ENCODE measurements at regions of chrX and their contacts with region 1.

Region 1: DNA sequence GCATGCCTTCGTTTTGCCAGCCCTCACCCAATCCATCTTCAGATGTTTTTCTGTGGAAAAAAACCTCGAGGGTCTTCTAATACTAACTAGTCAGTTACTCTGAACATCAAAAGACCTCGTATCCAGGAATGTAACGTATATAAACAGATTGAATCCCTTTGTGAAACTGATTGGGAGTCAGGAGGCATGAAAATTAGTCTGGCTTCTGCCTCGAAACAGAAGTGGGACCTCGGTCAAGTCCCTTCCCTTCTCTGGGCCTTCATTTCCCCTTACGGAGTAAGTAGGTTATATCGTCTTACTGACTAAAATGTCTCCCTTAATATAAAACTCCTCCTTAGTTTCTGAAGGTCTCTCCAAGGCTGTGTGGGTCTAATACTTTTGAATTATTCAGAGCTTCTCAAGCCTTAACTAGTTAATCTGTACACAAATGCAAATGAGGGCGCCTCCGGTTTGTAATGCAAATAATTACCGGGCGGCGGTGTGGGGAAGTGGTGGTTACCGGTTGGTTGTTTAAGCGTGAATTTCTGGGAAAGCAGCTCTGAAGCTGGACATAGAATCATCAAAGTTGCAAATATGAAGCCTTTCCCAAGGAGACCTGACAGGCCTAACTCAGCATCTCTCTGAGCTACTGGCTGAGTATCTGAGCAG is 11.4 kb upstream of the NKRF start:
- DNase-seq: no peak
- ATAC-seq: peak; percentile 76
- H3K4me3 ChIP-seq: peak overlapping the region; percentile 29; the same call in 1 of the 2 replicates
- H3K27ac ChIP-seq: peak overlapping the region; percentile 54
- H3K4me1 ChIP-seq: peaks cover 30% of the 10 kb centered on the region
- H3K27me3 ChIP-seq: no peaks in the 10 kb centered on the region
- CTCF ChIP-seq: no peak
- EP300 ChIP-seq: no peak
- POLR2A ChIP-seq: 0 out of 2 replicates have a peak, but pooled peaks have one; percentile 4
- RAD21 ChIP-seq: no peak

Region 2: GRCh38 chrX:119606280-119607015 is 11.2 kb before region 1 on chrX and contains the start of gene NKRF:
- CTCF ChIA-PET with region 1: interaction called, 23 read pairs
- POLR2A ChIA-PET with region 1: interaction called, 13 read pairs
- RAD21 ChIA-PET with region 1: interaction called, 20 read pairs
- SMC1A ChIA-PET with region 1: interaction called, 9 read pairs
- in situ Hi-C with region 1: no loop called
- intact Hi-C with region 1: no loop called
- DNase-seq: peak; percentile 78
- ATAC-seq: peak; percentile 78
- H3K4me3 ChIP-seq: peak within 1 kb of the TSS; percentile 57
- H3K27ac ChIP-seq: peak within 1 kb of the TSS; percentile 85
- H3K4me1 ChIP-seq: no peaks in the 10 kb centered on the region; the same call in 1 of the 2 replicates
- H3K27me3 ChIP-seq: no peaks in the 10 kb centered on the region
- CTCF ChIP-seq: no peak
- EP300 ChIP-seq: no peak
- POLR2A ChIP-seq: peak; percentile 93
- RAD21 ChIP-seq: no peak
- polyA plus RNA-seq, gene NKRF: 6.2 to 9.5 TPM

Region 3: DNA sequence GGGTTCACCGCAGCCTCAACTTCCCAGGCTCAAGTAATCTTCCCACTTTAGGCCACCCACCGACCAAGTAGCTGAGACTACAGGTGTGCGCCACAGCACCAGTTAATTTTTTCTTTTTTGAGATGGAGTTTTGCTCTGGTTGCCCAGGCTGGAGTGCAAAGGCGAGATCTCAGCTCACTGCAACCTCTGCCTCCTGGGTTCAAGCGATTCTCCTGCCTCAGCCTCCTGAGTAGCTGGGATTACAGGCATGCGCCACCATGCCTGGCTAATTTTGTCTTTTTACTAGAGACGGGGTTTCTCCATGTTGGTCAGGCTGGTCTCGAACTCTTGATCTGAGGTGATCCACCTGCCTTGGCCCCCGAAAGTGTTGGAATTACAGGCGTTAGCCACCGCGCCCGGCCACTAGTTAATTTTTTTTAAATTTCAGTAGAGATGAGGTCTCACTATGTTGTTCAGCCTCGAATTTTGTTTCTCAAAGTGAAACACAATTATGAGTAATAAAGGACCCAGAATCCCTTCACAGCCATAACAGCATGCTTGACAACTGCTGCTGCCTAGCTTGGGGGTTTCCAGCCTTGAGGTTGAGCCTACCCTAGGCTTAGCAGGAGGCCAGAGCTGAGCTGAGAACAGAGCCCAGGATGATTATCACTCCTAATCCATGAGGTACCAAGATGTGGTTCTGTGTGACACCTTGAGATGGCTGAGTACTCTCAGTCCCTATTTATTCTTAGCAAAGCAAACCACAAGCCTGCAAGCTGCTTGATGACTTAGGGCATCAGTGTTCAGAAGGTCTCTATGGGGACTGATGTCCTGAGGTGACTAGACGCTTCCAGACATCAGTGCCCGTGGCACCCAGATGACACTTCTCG is 30.1 kb after region 1 on chrX:
- CTCF ChIA-PET with region 1: interaction called, 9 read pairs
- POLR2A ChIA-PET with region 1: interaction called, 4 read pairs
- RAD21 ChIA-PET with region 1: interaction called, 32 read pairs
- SMC1A ChIA-PET with region 1: interaction called, 48 read pairs
- in situ Hi-C with region 1: no loop called
- intact Hi-C with region 1: loop called (anchors 1 kb)
- DNase-seq: peak; percentile 98
- ATAC-seq: peak; percentile 95
- H3K4me3 ChIP-seq: 0 out of 2 replicates have a peak overlapping the region, but pooled peaks have one; percentile 11
- H3K27ac ChIP-seq: peak overlapping the region; percentile 89
- H3K4me1 ChIP-seq: peaks cover 47% of the 10 kb centered on the region
- H3K27me3 ChIP-seq: no peaks in the 10 kb centered on the region
- CTCF ChIP-seq: no peak
- EP300 ChIP-seq: peak; percentile 94 to 97
- POLR2A ChIP-seq: peak; percentile 53
- RAD21 ChIP-seq: no peak

Region 4: DNA sequence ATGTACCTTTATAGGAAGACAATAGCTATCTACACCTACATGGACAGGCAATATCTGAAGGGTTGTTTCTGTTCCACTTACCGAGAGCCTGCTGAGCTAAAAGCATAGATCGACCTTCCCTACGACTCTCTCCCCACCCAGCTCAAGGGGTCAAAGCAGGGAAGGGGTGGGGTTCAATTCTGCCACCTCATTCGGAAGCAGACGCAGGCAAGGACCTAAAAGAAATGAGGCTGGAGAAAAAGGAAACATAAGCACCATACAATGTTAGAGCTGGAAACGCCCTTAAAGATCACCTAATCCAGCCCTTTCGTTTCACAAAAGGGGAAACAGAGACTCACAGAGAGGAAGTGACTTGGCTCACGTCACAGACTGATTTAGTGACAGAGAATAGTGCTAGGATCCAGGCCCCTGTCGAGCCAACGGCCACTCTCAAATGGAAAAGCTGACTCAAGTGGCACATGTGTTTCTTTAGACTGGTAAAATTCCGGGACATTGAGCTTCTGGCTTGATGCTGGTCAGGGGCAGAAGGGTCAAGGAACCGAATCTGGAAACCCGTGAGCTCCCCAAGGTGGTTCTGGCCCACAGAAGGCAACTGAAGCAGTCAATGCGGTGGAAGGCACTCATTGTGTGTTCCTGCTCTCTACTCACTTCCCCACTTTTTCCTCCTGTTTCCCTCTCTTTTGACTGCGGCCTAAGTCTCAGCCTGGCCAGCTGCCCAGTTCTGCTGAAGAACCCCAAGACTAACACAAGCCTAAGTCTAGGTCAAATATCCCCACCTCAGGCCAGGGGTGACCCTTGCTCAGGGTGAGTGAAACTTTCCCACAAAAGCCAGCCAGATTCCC is 67.8 kb after region 1 on chrX:
- CTCF ChIA-PET with region 1: interaction called, 10 read pairs
- POLR2A ChIA-PET with region 1: interaction called, 12 read pairs
- RAD21 ChIA-PET with region 1: interaction called, 24 read pairs
- SMC1A ChIA-PET with region 1: interaction called, 30 read pairs
- in situ Hi-C with region 1: no loop called
- intact Hi-C with region 1: loop called (anchors 5 kb)
- DNase-seq: no peak
- ATAC-seq: peak; percentile 56
- H3K4me3 ChIP-seq: peak overlapping the region; percentile 60; the same call in 1 of the 2 replicates
- H3K27ac ChIP-seq: peak overlapping the region; percentile 84
- H3K4me1 ChIP-seq: peaks cover 57% of the 10 kb centered on the region
- H3K27me3 ChIP-seq: no peaks in the 10 kb centered on the region
- CTCF ChIP-seq: no peak
- EP300 ChIP-seq: no peak
- POLR2A ChIP-seq: no peak
- RAD21 ChIP-seq: no peak

Region 5: GRCh38 chrX:119775517-119776238 is 158.0 kb after region 1 on chrX:
- CTCF ChIA-PET with region 1: interaction called, 13 read pairs
- POLR2A ChIA-PET with region 1: interaction called, 3 read pairs
- RAD21 ChIA-PET with region 1: interaction called, 14 read pairs
- SMC1A ChIA-PET with region 1: interaction called, 5 read pairs
- in situ Hi-C with region 1: no loop called
- intact Hi-C with region 1: loop called (anchors 1 kb)
- DNase-seq: no peak
- ATAC-seq: peak; percentile 69
- H3K4me3 ChIP-seq: no peak overlapping the region
- H3K27ac ChIP-seq: peak overlapping the region; percentile 83
- H3K4me1 ChIP-seq: peaks cover 5% of the 10 kb centered on the region
- H3K27me3 ChIP-seq: no peaks in the 10 kb centered on the region
- CTCF ChIP-seq: no peak
- EP300 ChIP-seq: no peak
- POLR2A ChIP-seq: 0 out of 2 replicates have a peak, but pooled peaks have one; percentile 38
- RAD21 ChIP-seq: no peak

Region 6: GRCh38 chrX:119871599-119872395 is 254.2 kb after region 1 on chrX and contains the starts of genes NDUFA1 and RNF113A:
- CTCF ChIA-PET with region 1: no interaction called
- POLR2A ChIA-PET with region 1: no interaction called
- RAD21 ChIA-PET with region 1: no interaction called
- SMC1A ChIA-PET with region 1: no interaction called
- in situ Hi-C with region 1: no loop called
- intact Hi-C with region 1: no loop called
- DNase-seq: peak; percentile 59
- ATAC-seq: peak; percentile 95
- H3K4me3 ChIP-seq: peak within 1 kb of the TSS; percentile 68
- H3K27ac ChIP-seq: peak within 1 kb of the TSS; percentile 91
- H3K4me1 ChIP-seq: no peaks in the 10 kb centered on the region
- H3K27me3 ChIP-seq: no peaks in the 10 kb centered on the region
- CTCF ChIP-seq: no peak
- EP300 ChIP-seq: no peak
- POLR2A ChIP-seq: peak; percentile 96
- RAD21 ChIP-seq: no peak
- polyA plus RNA-seq, gene NDUFA1: 999 to 1,113 TPM
- polyA plus RNA-seq, gene RNF113A: 22.7 to 23.1 TPM

Measured in GM12878 (cell line).